Activated CD8-positive, alpha-beta T cell treated with anti-CD3 and anti-CD28 coated beads for 36 hours (primary cell): ENCODE measurements at regions of chr16 and their contacts with region 1.

Region 1: GRCh38 chr16:87636072-87636684 is 33.9 kb downstream of the JPH3 start:
- DNase-seq: peak; percentile 93
- ATAC-seq: peak; percentile 91
- H3K4me3 Mint-ChIP-seq: peak overlapping the region; percentile 63
- H3K27ac Mint-ChIP-seq: no peak overlapping the region
- H3K4me1 Mint-ChIP-seq: peaks cover 17% of the 10 kb centered on the region
- H3K27me3 Mint-ChIP-seq: no peaks in the 10 kb centered on the region
- CTCF ChIP-seq: peak; percentile 80

Region 2: GRCh38 chr16:87316923-87317749 is 319.0 kb before region 1 on chr16 and contains the start of gene C16orf95:
- CTCF ChIA-PET with region 1: interaction called, 14 read pairs
- POLR2A ChIA-PET with region 1: interaction called, 4 read pairs
- intact Hi-C with region 1: no loop called
- DNase-seq: peak; percentile 97
- ATAC-seq: peak; percentile 91
- H3K4me3 Mint-ChIP-seq: peak within 1 kb of the TSS; percentile 91
- H3K27ac Mint-ChIP-seq: peak within 1 kb of the TSS; percentile 95
- H3K4me1 Mint-ChIP-seq: peaks cover 13% of the 10 kb centered on the region
- H3K27me3 Mint-ChIP-seq: no peaks in the 10 kb centered on the region
- CTCF ChIP-seq: peak; percentile 71
- total RNA-seq, gene C16orf95: 11.5 to 13.6 TPM

Region 3: GRCh38 chr16:87435372-87436224 is 200.6 kb before region 1 on chr16:
- CTCF ChIA-PET with region 1: interaction called, 11 read pairs
- POLR2A ChIA-PET with region 1: no interaction called
- intact Hi-C with region 1: no loop called
- DNase-seq: no peak
- ATAC-seq: no peak
- H3K4me3 Mint-ChIP-seq: peak overlapping the region; percentile 29
- H3K27ac Mint-ChIP-seq: no peak overlapping the region
- H3K4me1 Mint-ChIP-seq: peaks cover 21% of the 10 kb centered on the region
- H3K27me3 Mint-ChIP-seq: no peaks in the 10 kb centered on the region
- CTCF ChIP-seq: no peak

Region 4: DNA sequence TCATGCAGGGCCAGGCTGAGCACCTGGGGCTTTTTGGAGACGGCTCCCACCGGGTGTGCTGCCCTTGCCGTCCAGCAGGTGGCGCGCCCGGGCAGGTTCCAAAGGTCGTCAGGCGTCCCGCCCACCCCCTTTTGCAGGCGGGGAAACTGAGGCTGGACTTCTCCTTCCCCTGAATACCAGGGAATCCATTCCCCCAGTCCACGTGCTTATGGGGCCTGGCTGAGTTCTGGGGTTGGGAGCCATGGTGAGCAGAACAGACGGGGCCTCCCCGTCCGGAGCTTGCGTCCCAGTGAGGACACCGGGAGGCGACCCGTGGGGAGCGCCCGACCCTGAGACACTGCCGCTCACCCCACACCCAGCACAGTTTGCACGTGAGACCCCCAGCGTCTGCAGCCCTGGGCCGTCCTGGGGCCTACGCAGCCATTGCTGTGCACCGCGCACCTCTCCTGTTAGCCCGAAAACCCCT is 85.6 kb before region 1 on chr16:
- CTCF ChIA-PET with region 1: interaction called, 8 read pairs
- POLR2A ChIA-PET with region 1: interaction called, 3 read pairs
- intact Hi-C with region 1: loop called (anchors 5 kb)
- DNase-seq: peak; percentile 63
- ATAC-seq: peak; percentile 81
- H3K4me3 Mint-ChIP-seq: no peak overlapping the region
- H3K27ac Mint-ChIP-seq: no peak overlapping the region
- H3K4me1 Mint-ChIP-seq: no peaks in the 10 kb centered on the region
- H3K27me3 Mint-ChIP-seq: peaks cover 12% of the 10 kb centered on the region
- CTCF ChIP-seq: peak; percentile 99

Region 5: GRCh38 chr16:87581833-87582203 is 54.4 kb before region 1 on chr16:
- CTCF ChIA-PET with region 1: interaction called, 33 read pairs
- POLR2A ChIA-PET with region 1: no interaction called
- intact Hi-C with region 1: loop called (anchors 10 kb)
- DNase-seq: no peak
- ATAC-seq: no peak
- H3K4me3 Mint-ChIP-seq: no peak overlapping the region
- H3K27ac Mint-ChIP-seq: no peak overlapping the region
- H3K4me1 Mint-ChIP-seq: peaks cover 2% of the 10 kb centered on the region
- H3K27me3 Mint-ChIP-seq: peaks cover 23% of the 10 kb centered on the region
- CTCF ChIP-seq: no peak

Region 6: GRCh38 chr16:87648236-87648635 is 12.1 kb after region 1 on chr16:
- CTCF ChIA-PET with region 1: interaction called, 11 read pairs
- POLR2A ChIA-PET with region 1: no interaction called
- intact Hi-C with region 1: no loop called
- DNase-seq: no peak
- ATAC-seq: no peak
- H3K4me3 Mint-ChIP-seq: no peak overlapping the region
- H3K27ac Mint-ChIP-seq: no peak overlapping the region
- H3K4me1 Mint-ChIP-seq: no peaks in the 10 kb centered on the region
- H3K27me3 Mint-ChIP-seq: peaks cover 2% of the 10 kb centered on the region
- CTCF ChIP-seq: no peak